ENCODE measurements at regions of chr4 and their contacts with region 1.

Region 1: DNA sequence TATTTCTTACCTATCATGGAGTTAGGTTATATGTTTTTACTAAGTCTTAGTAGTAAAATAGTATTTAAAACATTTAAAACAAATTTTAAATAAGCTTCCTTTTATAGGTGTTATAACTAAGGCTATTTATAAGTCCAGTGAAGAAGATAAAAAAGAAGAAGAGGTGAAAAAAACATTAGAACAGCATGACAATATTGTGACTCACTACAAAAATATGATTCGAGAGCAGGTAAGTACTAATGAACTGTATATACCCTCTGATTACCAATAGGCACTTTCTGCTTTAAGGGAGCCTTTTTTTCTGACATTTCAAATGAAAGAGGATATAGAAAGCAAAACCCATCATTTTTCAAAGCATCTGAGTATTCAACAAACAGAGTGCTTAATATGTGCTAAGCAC is 76.6 kb downstream of the USO1 start:
- DNase-seq: no peak
- H3K4me3 ChIP-seq: no peak overlapping the region
- H3K27me3 ChIP-seq: no peaks in the 10 kb centered on the region
- CTCF ChIP-seq: no peak

Region 2: GRCh38 chr4:75771607-75772006 is 29.4 kb before region 1 on chr4:
- CTCF ChIA-PET with region 1: no interaction called
- POLR2A ChIA-PET with region 1: no interaction called
- DNase-seq: no peak
- H3K4me3 ChIP-seq: no peak overlapping the region
- H3K27me3 ChIP-seq: no peaks in the 10 kb centered on the region
- CTCF ChIP-seq: no peak

Region 3: DNA sequence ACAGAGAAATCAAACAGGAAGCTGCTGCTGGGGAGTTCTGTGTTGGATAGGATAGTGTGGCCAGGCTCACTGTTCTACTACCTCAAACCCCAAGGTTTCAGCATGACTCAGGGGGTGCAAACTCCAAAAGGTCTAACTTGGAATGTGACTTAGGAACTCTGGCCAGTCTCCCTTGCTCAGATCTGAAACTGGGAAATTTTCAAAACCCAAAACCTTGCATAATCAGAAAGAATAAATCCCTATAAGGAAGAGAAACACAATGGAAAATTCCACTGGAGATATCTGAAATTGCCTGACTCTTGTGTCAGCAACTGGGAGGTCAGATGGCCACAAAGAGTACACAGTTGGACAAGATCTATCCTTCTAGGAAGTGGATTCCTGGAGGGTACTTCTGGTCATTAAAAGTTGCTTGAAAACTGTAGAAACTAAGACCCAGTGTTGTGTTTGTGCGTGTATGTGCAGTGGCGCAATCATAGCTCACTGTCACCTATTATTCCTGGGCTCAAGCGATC is 43.2 kb after region 1 on chr4:
- CTCF ChIA-PET with region 1: interaction called, 10 read pairs
- POLR2A ChIA-PET with region 1: no interaction called
- DNase-seq: peak; percentile 79
- H3K4me3 ChIP-seq: no peak overlapping the region
- H3K27me3 ChIP-seq: no peaks in the 10 kb centered on the region
- CTCF ChIP-seq: no peak